ENCODE measurements at regions of chr19 and their contacts with region 1.

Region 1: DNA sequence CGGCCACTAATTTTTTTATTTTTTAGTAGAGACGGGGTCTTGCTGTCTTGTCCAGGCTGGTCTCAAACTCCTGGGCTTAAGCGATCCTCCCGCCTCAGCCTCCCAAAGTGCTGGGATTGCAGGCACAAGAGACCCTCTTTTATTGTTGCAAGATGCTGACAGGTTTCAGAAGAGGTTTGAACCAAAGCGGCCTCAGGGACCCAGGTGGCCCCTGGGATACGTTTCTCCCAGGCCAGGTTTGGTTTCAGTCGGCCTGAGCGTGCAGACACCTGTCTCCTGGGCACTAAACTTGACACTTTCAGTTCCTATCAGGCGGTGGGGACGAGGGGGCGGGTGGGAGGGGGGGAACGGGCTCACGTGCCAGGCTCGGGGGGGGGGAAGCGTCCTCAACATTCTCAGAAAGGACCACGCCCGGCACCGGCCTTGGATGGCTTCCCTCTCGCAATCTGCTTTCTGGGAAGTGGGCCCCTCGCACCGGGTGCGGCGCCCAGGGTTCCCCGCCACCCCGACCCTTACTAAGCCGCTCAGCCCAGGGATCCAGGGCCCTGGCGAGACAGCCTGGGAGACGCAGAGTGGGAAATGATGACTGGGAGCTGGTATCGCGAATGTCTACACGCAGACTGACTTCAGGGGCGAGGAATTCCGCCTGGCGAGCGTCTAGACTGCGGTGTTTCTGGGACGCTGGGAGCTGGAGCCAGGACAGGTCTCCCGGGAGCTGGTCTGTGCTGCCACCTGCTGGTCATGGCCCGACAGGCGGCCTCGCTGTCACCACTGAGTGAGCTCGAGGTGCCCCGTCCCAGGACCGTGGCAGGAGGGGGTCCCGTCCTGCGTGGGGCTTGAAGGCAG is 91.6 kb downstream of the GNG7 start:
- DNase-seq: peak; percentile 92
- ATAC-seq: peak; percentile 43
- H3K4me3 Mint-ChIP-seq: peak overlapping the region; percentile 73
- H3K27ac Mint-ChIP-seq: peak overlapping the region; percentile 85
- H3K4me1 Mint-ChIP-seq: peaks cover 52% of the 10 kb centered on the region
- H3K27me3 Mint-ChIP-seq: peaks cover under 1% of the 10 kb centered on the region
- CTCF ChIP-seq: peak; percentile 97

Region 2: DNA sequence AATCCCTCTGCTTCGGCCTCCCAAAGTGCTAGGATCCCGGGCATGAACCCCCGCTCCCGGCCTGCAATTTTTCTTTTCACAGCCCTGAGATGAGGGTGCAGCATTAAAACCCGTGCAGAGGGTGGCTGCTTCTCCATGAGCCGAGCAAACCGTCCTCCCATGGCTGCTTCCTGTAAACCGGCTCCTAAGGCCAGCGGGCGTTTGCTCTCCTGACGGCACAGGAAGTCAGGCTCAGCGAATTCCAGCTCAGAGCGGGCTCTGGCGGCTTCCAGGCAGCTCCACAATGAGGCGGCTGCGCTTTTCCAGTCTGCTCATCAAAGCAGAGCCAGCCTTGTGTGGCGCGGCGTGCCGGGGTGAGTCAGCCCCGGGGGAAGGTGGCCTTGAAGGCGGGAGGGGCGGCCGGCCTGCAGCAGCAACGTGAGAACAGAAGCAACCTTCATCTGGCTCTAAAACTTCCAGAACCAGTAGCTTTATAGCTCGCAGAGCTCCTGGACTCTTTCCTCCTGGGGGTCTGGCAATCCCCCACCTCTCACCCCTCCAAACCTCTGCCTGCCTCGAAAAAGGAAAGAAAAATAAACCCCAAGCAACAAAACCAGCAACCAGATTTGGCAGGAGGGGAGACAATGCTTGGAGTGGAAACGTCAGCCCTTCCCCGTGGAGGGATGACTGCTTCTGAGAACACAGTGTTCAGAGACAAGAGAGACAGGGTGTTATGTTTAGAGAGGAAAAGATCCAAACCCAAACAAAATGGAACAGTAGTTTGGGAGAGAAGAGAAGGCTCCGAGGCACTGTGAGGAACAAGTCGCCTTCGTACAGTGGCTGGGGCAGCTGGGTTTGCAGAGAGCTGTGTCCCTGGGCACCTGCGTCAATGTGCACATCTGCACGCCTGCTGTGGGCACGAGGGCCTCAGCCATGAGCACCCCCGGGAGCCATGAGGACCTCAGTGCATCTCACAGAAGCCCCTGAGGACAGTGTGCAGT is 67.1 kb before region 1 on chr19:
- CTCF ChIA-PET with region 1: interaction called, 13 read pairs
- POLR2A ChIA-PET with region 1: no interaction called
- intact Hi-C with region 1: no loop called
- DNase-seq: peak; percentile 86
- ATAC-seq: peak; percentile 94
- H3K4me3 Mint-ChIP-seq: peak overlapping the region; percentile 58
- H3K27ac Mint-ChIP-seq: peak overlapping the region; percentile 79
- H3K4me1 Mint-ChIP-seq: peaks cover 19% of the 10 kb centered on the region
- H3K27me3 Mint-ChIP-seq: no peaks in the 10 kb centered on the region
- CTCF ChIP-seq: no peak

Region 3: DNA sequence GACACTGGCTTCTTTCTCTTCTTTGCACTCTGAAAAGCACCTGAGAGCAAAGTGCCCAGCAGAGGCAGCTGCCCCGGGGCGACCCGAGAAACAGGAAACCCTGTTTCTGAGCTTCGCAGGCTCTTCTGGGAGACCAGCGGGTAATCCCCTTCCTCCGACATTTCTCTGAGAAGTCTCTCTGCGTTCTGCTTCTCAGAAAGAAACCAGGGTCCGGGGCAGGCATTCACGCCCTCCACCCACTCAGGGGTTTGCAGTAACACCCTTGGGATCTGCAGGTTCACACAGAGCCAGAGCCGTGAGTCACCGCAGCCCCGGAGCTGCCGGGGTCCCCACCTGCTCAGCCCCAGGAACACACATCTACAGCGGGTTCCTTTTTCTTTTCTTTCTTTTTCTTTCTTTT is 49.0 kb before region 1 on chr19:
- CTCF ChIA-PET with region 1: interaction called, 11 read pairs
- POLR2A ChIA-PET with region 1: interaction called, 5 read pairs
- intact Hi-C with region 1: no loop called
- DNase-seq: peak; percentile 97
- ATAC-seq: peak; percentile 95
- H3K4me3 Mint-ChIP-seq: peak overlapping the region; percentile 74
- H3K27ac Mint-ChIP-seq: peak overlapping the region; percentile 86
- H3K4me1 Mint-ChIP-seq: peaks cover 27% of the 10 kb centered on the region
- H3K27me3 Mint-ChIP-seq: no peaks in the 10 kb centered on the region
- CTCF ChIP-seq: no peak

Region 4: DNA sequence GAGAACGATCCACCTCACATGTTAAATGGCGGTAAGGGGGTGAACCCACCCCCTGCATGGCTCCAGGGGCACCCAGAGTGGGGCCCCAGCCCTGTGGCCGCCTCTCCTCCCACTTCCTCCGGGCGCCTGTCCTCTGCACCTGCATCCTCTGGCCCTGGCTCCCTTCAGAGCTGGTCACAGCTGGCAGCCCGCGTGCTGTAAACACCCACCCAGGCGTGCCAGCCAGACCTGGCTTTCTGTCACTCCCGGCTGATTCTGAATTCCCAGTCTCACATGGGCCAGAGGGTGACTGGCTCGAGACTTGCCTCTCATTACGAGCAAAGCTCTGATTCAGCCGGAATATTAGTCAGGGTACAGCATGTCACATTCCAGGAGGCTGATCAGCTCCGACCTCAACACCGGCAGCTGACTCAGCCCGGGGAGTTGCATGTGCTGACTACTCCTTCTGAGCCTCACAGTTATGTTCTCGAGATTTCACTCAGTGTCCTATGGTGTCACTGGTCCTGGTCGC is 16.5 kb after region 1 on chr19:
- CTCF ChIA-PET with region 1: interaction called, 74 read pairs
- POLR2A ChIA-PET with region 1: interaction called, 3 read pairs
- intact Hi-C with region 1: no loop called
- DNase-seq: peak; percentile 65
- ATAC-seq: peak; percentile 77
- H3K4me3 Mint-ChIP-seq: no peak overlapping the region
- H3K27ac Mint-ChIP-seq: peak overlapping the region; percentile 78
- H3K4me1 Mint-ChIP-seq: peaks cover 33% of the 10 kb centered on the region
- H3K27me3 Mint-ChIP-seq: no peaks in the 10 kb centered on the region
- CTCF ChIP-seq: no peak

Region 5: DNA sequence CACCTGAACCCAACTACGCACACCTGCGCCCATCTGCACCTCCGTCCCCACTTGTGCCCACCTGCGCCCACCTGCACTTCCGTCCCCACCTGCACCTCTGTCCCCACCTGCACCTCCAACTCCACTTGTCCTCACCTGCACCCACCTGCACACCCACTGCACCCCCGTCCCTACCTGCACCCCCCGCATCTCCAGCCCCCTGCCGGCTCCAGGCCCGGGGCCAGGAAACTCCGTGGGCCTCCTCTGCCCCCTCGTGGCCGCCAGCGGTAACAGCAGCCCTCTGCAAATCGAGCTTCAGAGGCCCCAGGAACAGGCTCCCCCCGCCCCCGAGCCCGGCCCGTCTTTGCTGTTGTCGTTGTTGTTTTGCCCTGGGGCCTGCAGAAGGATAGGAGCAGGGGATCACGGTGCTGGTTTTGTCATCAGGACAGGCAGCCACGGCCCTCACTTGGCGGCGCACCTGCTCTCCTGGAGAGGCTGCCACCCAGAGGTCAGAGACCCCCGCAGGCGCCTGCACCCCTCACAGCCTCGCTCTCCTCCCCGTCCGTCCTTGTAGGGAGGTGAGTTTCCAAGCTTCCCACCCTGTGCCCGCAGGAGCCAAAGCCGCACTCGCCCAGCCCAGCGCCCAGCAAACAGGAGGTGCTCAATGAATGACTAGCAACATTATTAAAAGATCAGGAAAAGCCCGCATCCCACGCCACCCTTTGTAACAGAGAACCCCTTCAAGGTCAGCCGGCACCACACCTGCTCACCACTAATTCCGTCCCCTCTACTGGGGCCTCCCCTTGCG is 26.2 kb after region 1 on chr19:
- CTCF ChIA-PET with region 1: interaction called, 96 read pairs
- POLR2A ChIA-PET with region 1: interaction called, 3 read pairs
- intact Hi-C with region 1: no loop called
- DNase-seq: peak; percentile 83
- ATAC-seq: peak; percentile 97
- H3K4me3 Mint-ChIP-seq: no peak overlapping the region
- H3K27ac Mint-ChIP-seq: no peak overlapping the region
- H3K4me1 Mint-ChIP-seq: peaks cover 14% of the 10 kb centered on the region
- H3K27me3 Mint-ChIP-seq: peaks cover 3% of the 10 kb centered on the region
- CTCF ChIP-seq: peak; percentile 78

Region 6: DNA sequence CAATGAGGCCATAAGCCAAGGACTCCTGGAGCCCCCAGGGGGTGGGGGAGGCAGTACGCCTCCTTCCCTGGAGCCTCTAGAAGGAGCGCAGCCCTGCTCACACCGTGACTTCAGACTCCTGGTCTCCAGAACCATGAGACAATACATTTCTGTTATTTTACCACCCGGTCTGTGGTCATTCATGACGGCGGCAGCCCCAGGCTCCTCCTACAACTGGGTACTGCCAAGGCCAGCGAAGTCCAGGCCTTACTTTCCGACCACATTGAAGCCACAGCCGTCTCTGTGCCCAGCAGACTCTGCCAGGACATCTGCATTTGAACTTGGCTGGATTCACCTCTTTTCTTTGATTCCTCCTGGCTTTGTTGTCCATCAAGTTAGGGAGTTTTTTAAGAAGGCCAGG is 81.1 kb after region 1 on chr19:
- CTCF ChIA-PET with region 1: no interaction called
- POLR2A ChIA-PET with region 1: no interaction called
- intact Hi-C with region 1: no loop called
- DNase-seq: no peak
- ATAC-seq: no peak
- H3K4me3 Mint-ChIP-seq: no peak overlapping the region
- H3K27ac Mint-ChIP-seq: no peak overlapping the region
- H3K4me1 Mint-ChIP-seq: no peaks in the 10 kb centered on the region
- H3K27me3 Mint-ChIP-seq: no peaks in the 10 kb centered on the region
- CTCF ChIP-seq: no peak

Measured in activated CD8-positive, alpha-beta T cell treated with anti-CD3 and anti-CD28 coated beads for 36 hours (primary cell).